ENCODE measurements at regions of chr21 and their contacts with region 1.

Region 1: DNA sequence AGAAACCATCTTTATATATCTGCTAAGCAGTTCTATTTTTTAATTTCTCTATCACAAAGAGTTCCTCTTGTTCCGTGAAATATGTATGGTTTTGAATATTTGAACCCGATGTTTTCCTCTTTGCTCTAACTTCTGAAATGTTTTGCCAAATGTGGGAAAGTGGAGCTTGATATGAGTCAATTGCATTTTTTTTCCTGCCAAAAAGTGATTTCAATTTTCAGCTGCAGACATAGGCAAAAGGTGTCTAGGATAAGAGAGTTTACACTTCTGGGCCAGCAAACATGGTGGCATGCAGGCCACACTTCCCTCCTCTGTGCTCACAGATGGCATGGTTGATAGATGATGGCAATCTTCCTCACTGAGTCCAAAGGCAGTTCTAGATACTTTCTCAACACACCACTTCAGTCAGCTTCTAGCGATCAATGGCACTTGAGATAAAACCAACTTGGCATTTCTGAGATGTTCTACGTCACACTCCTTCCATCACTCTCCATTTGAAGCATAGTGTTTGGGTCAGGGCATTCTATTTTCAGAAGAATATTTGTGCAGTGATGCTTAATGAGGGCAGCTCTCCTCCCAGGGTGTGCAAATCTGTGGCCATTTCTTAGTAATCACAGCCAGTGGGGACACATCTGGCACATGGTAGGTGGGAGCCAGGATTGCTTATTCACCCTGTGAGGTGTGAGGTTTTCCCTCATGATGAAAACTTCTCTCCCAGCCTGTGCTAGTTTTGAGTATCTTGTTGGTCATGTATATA is 54.4 kb upstream of the SCAF4 start:
- DNase-seq: no peak
- ATAC-seq: no peak
- H3K4me3 ChIP-seq: no peak overlapping the region
- H3K4me3 Mint-ChIP-seq: no peak overlapping the region
- H3K27ac ChIP-seq: no peak overlapping the region
- H3K27ac Mint-ChIP-seq: no peak overlapping the region
- H3K4me1 ChIP-seq: no peaks in the 10 kb centered on the region
- H3K4me1 Mint-ChIP-seq: peaks cover 5% of the 10 kb centered on the region
- H3K27me3 ChIP-seq: no peaks in the 10 kb centered on the region
- H3K27me3 Mint-ChIP-seq: peaks cover 10% of the 10 kb centered on the region
- CTCF ChIP-seq: peak; percentile 8

Region 2: GRCh38 chr21:30502041-30502440 is 1284.3 kb before region 1 on chr21 and contains the start of gene KRTAP19-5:
- CTCF ChIA-PET with region 1: no interaction called
- POLR2A ChIA-PET with region 1: no interaction called
- intact Hi-C with region 1: no loop called
- DNase-seq: no peak
- ATAC-seq: no peak
- H3K4me3 ChIP-seq: no peak within 1 kb of the TSS
- H3K4me3 Mint-ChIP-seq: no peak within 1 kb of the TSS
- H3K27ac ChIP-seq: no peak within 1 kb of the TSS
- H3K27ac Mint-ChIP-seq: no peak within 1 kb of the TSS
- H3K4me1 ChIP-seq: no peaks in the 10 kb centered on the region
- H3K4me1 Mint-ChIP-seq: no peaks in the 10 kb centered on the region
- H3K27me3 ChIP-seq: no peaks in the 10 kb centered on the region
- H3K27me3 Mint-ChIP-seq: no peaks in the 10 kb centered on the region
- CTCF ChIP-seq: no peak
- total RNA-seq, gene KRTAP19-5: not detected

Region 3: DNA sequence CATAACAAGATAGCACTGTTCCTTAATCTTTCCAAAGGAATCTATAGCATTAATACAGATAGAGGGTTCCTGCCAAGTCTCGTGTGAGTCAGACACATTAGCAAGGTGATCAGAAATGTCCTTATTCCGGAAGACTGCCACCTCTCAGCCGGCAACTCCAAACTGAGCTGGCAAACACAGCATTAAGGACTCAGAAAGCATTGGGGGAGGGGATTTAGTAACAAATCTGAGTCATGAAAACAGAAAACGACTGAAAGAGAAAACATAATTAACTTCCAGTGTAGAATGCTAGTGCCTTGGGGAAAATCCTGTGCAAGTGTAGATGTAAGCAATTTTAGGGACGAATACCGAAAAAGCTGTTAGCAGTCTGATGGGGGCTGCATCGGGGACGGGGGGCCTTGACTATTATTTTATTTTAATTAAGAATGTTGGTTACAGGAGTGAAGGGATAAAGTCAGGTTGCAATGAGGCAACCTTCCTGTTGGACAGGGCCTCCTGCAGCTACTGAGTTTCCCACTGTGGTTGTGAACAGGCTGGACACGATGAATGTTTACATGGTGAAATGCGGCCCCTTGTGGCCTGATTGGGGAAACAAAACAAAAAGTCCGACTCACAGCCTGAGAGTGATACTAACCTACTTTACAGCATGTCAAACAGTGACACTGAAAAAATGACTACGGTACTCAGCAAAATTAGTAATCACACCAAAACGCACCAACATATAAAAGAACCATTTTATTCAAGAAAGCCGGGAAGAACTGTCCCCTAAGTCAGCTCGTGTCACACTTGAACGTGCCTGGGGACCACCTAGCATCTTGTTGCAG is 471.8 kb after region 1 on chr21:
- CTCF ChIA-PET with region 1: interaction called, 6 read pairs
- POLR2A ChIA-PET with region 1: no interaction called
- intact Hi-C with region 1: loop called in 1 of 2 experiments (anchors 2 kb)
- DNase-seq: peak in 6 of 9 experiments; percentile 9 to 55 (median 34)
- ATAC-seq: no peak
- H3K4me3 ChIP-seq: no peak overlapping the region
- H3K4me3 Mint-ChIP-seq: no peak overlapping the region
- H3K27ac ChIP-seq: no peak overlapping the region
- H3K27ac Mint-ChIP-seq: no peak overlapping the region
- H3K4me1 ChIP-seq: no peaks in the 10 kb centered on the region
- H3K4me1 Mint-ChIP-seq: peaks cover 3% of the 10 kb centered on the region
- H3K27me3 ChIP-seq: no peaks in the 10 kb centered on the region
- H3K27me3 Mint-ChIP-seq: peaks cover 10% of the 10 kb centered on the region
- CTCF ChIP-seq: peak; percentile 46